ENCODE measurements at regions of chr3 and their contacts with region 1.

Region 1: DNA sequence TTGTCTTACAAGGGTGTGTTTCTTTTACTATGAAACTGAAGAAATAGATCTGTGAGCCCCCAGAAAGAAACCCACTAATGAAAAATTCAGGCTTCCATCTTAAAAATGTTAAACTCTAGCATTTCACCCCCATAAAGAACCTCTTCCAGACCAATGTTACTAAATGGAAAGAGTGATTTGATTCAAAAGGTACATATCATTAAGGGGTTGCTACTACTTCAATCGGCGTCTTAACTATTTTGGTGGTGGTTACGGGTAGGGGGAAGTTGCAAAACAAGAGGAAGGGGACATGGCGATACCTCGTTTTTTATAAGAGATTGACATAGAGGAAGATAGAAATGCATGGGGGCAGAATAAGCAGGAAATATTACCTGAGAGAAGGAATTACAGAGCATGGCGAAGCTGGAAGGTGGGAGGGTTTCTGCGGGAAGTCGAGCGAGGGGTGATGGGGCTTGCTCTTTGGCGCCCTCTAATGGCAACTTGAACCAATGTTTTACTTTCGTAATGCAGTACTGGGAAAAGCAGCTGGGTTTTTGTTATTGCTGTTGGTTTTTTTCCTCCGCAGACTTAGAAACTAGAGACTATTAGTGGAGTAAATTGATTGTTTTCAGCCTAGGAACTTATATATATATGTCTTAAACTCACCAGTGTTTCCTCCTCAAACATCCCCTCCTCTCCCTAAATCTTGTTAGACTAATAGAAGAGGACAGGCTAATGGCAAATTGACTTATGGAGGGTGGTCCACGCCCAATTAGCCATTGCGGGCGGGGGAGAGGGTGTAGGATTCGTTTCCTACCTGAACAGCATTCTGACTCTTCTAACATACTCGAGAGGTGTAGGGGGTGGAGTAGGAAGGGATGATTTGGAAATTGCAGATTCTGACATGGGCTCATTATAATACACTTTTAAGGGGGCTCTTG is 11.3 kb upstream of the SOX2 start:
- DNase-seq: peak; percentile 45
- H3K4me3 Mint-ChIP-seq: peak overlapping the region; percentile 25
- H3K27ac Mint-ChIP-seq: peak overlapping the region; percentile 9
- H3K4me1 Mint-ChIP-seq: peaks cover 21% of the 10 kb centered on the region
- H3K27me3 Mint-ChIP-seq: peaks cover 88% of the 10 kb centered on the region

Region 2: GRCh38 chr3:180679178-180680096 is 1021.0 kb before region 1 on chr3 and contains the start of gene CCDC39:
- intact Hi-C with region 1: loop called (anchors 10 kb)
- DNase-seq: peak; percentile 26
- H3K4me3 Mint-ChIP-seq: peak within 1 kb of the TSS; percentile 83
- H3K27ac Mint-ChIP-seq: peak within 1 kb of the TSS; percentile 64
- H3K4me1 Mint-ChIP-seq: peaks cover 22% of the 10 kb centered on the region
- H3K27me3 Mint-ChIP-seq: peaks cover 41% of the 10 kb centered on the region
- total RNA-seq, gene CCDC39: not detected in 2 replicates

Region 3: DNA sequence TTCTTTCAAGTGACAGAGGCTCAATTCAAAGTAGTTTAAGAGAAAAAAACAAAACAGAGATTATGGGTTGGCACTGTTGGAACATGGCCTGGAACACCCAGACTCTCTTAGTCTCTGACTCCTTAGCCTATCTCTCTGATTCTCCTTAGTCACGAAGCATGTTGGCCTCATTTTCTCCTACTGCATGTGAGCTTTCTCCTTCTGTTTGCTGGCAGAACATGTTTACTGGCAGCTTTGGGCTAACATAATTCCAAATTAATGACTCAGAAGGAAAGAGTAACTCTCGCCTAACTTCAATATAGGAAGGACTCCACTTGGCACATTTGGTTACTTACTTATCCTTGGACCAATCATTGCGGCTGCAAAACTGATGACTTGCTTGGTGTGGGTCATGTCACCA is 999.5 kb before region 1 on chr3:
- intact Hi-C with region 1: no loop called
- DNase-seq: no peak
- H3K4me3 Mint-ChIP-seq: no peak overlapping the region
- H3K27ac Mint-ChIP-seq: no peak overlapping the region
- H3K4me1 Mint-ChIP-seq: no peaks in the 10 kb centered on the region
- H3K27me3 Mint-ChIP-seq: no peaks in the 10 kb centered on the region

Region 4: GRCh38 chr3:181210275-181210674 is 490.2 kb before region 1 on chr3:
- intact Hi-C with region 1: loop called (anchors 10 kb)
- DNase-seq: no peak
- H3K4me3 Mint-ChIP-seq: no peak overlapping the region
- H3K27ac Mint-ChIP-seq: no peak overlapping the region
- H3K4me1 Mint-ChIP-seq: no peaks in the 10 kb centered on the region
- H3K27me3 Mint-ChIP-seq: no peaks in the 10 kb centered on the region

Region 5: GRCh38 chr3:181715571-181716340 is 15.3 kb after region 1 on chr3:
- intact Hi-C with region 1: loop called (anchors 2 kb)
- DNase-seq: no peak
- H3K4me3 Mint-ChIP-seq: no peak overlapping the region
- H3K27ac Mint-ChIP-seq: no peak overlapping the region
- H3K4me1 Mint-ChIP-seq: no peaks in the 10 kb centered on the region
- H3K27me3 Mint-ChIP-seq: peaks cover 78% of the 10 kb centered on the region

Region 6: GRCh38 chr3:182258538-182259177 is 558.2 kb after region 1 on chr3:
- intact Hi-C with region 1: loop called (anchors 10 kb)
- DNase-seq: no peak
- H3K4me3 Mint-ChIP-seq: no peak overlapping the region
- H3K27ac Mint-ChIP-seq: no peak overlapping the region
- H3K4me1 Mint-ChIP-seq: no peaks in the 10 kb centered on the region
- H3K27me3 Mint-ChIP-seq: no peaks in the 10 kb centered on the region

Region 7: DNA sequence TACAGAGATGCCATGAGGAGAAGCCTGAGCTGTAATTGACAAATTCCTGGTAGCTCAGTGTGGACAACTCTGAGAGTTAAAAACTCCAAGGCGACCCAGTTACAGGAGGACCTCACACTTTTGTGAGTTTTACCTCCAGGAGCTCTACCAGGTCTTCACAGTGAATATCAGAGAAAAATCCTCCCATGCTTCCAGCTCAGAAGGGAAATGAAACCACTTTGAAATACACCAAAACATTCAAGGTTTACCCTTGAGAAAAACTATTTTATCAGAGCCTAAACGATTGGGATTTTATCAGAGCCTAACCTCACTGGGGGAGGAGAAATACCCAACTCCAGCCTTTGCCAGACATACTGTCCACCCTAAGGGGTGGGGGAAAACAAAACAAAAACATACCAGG is 1346.5 kb after region 1 on chr3:
- intact Hi-C with region 1: no loop called
- DNase-seq: no peak
- H3K4me3 Mint-ChIP-seq: no peak overlapping the region
- H3K27ac Mint-ChIP-seq: no peak overlapping the region
- H3K4me1 Mint-ChIP-seq: peaks cover 8% of the 10 kb centered on the region
- H3K27me3 Mint-ChIP-seq: no peaks in the 10 kb centered on the region

Region 8: GRCh38 chr3:183438735-183439134 is 1738.3 kb after region 1 on chr3:
- intact Hi-C with region 1: no loop called
- DNase-seq: no peak
- H3K4me3 Mint-ChIP-seq: no peak overlapping the region
- H3K27ac Mint-ChIP-seq: no peak overlapping the region
- H3K4me1 Mint-ChIP-seq: peaks cover 39% of the 10 kb centered on the region
- H3K27me3 Mint-ChIP-seq: peaks cover 4% of the 10 kb centered on the region